GM18951 (cell line): ENCODE measurements at regions of chr3 and their contacts with region 1.

Region 1: GRCh38 chr3:114827495-114827894 is 319.6 kb downstream of the ZBTB20 start:
- POLR2A ChIP-seq: no peak

Region 2: DNA sequence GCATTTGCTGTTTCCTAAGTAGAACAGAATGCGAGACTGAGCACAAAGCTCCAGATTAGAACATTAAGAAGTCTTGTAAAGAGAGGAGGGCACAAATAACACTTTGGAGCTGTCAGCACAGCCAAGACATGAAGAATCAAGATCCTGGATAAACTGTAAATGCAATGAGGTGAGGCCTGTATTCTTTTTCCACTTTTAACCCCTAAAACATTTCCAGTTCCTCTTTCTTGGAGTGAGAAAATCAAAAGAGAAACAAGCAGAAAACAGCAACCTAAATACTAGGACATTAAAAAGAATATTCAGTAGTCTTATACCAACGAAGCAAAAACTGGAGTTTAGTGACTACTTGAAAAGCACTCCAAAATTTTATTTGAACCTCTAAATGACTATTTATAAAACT is 115.3 kb after region 1 on chr3:
- in situ Hi-C with region 1: no loop called
- POLR2A ChIP-seq: no peak

Region 3: DNA sequence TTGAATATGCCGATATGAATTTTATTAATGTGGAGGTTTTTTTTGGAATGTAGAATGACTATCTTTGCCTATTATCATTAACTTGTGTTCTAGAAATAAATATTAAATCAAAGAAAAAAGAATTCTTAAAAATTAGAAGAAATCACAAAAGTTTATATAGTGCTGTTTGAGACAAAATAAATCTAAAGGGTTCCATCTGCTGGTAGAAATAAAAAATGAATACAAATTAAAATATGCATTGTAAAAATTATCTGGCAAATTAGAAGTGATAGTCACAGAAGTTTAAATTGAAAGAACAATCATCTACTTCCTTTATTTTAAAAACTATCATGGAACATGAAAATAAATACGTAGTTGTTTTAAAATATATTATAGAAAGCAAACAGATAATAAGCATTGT is 342.3 kb after region 1 on chr3:
- in situ Hi-C with region 1: loop called (anchors 25 kb)
- POLR2A ChIP-seq: no peak

Region 4: DNA sequence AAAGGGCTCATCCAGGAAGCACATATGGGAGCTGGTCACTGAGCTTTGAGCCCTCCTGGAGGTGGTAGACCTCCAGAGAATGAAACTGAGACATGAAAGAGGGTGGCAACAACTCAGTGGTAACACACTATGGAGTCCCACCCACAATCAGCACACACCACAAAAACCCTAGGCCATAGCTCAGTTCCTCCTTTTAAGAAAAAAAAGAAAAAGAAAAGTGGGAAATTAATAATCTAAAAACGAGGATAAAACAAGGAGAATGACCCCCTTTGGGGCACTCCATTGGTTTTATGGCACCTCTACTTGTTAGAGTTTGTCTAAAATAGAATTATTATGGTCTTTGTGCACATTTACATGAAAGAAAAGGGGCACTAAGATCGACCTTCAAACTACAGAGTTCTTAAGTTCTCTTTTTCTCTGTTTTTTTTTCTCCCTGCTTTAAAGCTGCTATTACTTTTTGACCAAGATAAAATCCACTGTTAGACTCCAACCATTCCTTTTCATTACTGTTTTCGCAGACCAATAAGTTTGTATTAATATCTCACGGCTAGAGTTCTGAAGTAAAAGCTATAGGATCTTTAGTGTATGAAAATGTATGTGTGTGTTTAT is 359.8 kb after region 1 on chr3:
- in situ Hi-C with region 1: no loop called
- POLR2A ChIP-seq: no peak

Region 5: DNA sequence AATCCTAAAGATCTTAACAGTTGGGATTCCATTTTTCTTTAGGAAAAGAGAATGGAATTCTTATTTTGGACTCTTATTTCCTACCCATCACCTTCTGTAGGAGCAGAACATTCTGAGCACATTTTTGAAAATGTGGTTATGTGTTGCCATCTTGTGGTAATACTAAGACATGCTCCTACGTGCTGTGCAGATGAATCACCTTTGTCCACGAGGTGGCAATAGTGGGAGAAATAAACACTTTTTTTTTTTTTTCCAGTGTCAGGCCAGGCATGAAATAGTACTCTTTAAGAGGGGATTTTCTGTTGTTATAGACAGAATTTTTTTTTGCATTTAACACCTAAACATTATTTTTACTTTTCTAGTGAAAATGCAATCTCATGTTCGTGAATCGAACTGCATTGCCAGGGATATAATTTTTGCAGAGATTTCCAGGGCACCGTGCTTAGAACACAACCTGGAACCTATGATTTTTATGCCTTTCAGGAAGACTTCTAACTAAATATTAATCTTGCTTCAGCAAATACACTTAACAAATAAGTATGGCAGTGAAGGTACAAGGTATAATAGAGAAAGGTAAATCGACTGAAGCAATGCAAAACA is 992.4 kb after region 1 on chr3:
- in situ Hi-C with region 1: loop called (anchors 25 kb)
- POLR2A ChIP-seq: no peak